B cell (primary cell): ENCODE measurements at regions of chr17 and their contacts with region 1.

Region 1: GRCh38 chr17:1229432-1229899 is 40.8 kb upstream of the BHLHA9 start:
- DNase-seq: peak; percentile 91
- ATAC-seq: peak; percentile 62
- H3K4me3 ChIP-seq: peak overlapping the region in 4 of 5 experiments; percentile 31 to 80 (median 66)
- H3K4me3 Mint-ChIP-seq: peak overlapping the region; percentile 83
- H3K27ac ChIP-seq: peak overlapping the region in 1 of 2 donors; percentile 82
- H3K27ac Mint-ChIP-seq: peak overlapping the region; percentile 78
- H3K4me1 ChIP-seq: peaks cover 25 to 32% of the 10 kb centered on the region in 2 donors
- H3K4me1 Mint-ChIP-seq: peaks cover 39% of the 10 kb centered on the region
- H3K27me3 ChIP-seq: peaks cover 0 to 11% (median 0%) of the 10 kb centered on the region in 4 experiments
- H3K27me3 Mint-ChIP-seq: peaks cover 9% of the 10 kb centered on the region
- CTCF ChIP-seq: no peak

Region 2: DNA sequence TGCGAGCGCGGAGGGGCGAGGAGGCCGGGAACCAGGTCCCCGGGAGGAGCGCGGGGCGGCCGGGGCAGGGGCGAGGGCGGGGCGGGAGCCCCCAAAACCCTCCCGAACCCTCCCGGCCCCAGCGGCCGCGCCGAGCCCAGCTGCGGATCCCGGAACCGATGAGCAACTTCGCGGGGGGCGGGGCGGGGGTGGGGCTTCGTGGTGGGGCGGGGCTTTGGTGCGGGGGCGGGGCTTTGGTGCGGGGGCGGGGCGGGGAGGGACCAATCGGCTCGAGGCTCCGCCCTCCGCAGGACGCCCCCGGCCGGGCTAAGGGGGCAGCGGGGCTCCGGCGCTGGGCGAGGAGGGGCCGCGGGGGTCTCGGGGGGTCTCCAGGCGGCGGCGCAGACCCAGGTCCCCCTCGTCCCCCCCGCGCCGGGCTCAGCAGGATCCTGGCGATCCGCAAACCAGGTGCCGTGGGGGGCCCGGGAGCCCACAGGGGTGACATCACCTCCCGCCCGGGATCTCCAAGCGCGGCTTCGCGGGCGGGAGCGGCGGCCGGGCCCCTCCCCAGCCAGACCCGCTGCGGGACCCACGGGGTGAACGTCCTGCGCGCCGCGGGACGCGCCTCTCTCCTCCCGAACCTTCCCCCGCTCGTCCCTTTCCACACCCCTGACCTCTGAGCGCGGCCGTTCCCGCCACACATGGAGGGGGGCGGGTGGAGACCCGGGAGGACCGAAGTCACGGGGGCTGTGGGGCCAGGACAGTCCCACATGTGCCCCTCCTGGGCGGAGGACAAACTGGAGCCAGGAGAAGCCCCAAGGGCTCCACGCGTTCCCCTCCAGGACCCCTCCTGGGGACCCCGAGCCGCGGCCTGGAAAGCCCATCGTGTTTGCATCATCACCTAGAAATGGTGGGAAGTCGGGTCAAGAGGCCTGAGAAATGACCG is 49.4 kb before region 1 on chr17 and contains the start of gene ABR:
- CTCF ChIA-PET with region 1: interaction called, 16 read pairs
- POLR2A ChIA-PET with region 1: interaction called, 8 read pairs
- intact Hi-C with region 1: loop called (anchors 2 kb)
- DNase-seq: peak; percentile 70
- ATAC-seq: peak; percentile 9
- H3K4me3 ChIP-seq: peak within 1 kb of the TSS in 4 of 5 experiments; percentile 47 to 71 (median 55)
- H3K4me3 Mint-ChIP-seq: peak within 1 kb of the TSS; percentile 87
- H3K27ac ChIP-seq: peak within 1 kb of the TSS in 1 of 2 donors; percentile 36
- H3K27ac Mint-ChIP-seq: peak within 1 kb of the TSS; percentile 53
- H3K4me1 ChIP-seq: peaks cover 59 to 69% of the 10 kb centered on the region in 2 donors
- H3K4me1 Mint-ChIP-seq: peaks cover 59% of the 10 kb centered on the region
- H3K27me3 ChIP-seq: peaks cover 0 to 24% (median 10%) of the 10 kb centered on the region in 4 experiments
- H3K27me3 Mint-ChIP-seq: no peaks in the 10 kb centered on the region
- CTCF ChIP-seq: no peak
- total RNA-seq, gene ABR: 262 and 304 TPM in 2 replicates

Region 3: GRCh38 chr17:1197781-1198490 is 31.5 kb before region 1 on chr17:
- CTCF ChIA-PET with region 1: interaction called, 42 read pairs
- POLR2A ChIA-PET with region 1: interaction called, 24 read pairs
- intact Hi-C with region 1: loop called (anchors 1 kb)
- DNase-seq: peak; percentile 92
- ATAC-seq: peak; percentile 87
- H3K4me3 ChIP-seq: peak overlapping the region in 1 of 5 experiments; percentile 29
- H3K4me3 Mint-ChIP-seq: peak overlapping the region; percentile 82
- H3K27ac ChIP-seq: peak overlapping the region; percentile 86 to 91
- H3K27ac Mint-ChIP-seq: peak overlapping the region; percentile 96
- H3K4me1 ChIP-seq: peaks cover 60 to 62% of the 10 kb centered on the region in 2 donors
- H3K4me1 Mint-ChIP-seq: peaks cover 60% of the 10 kb centered on the region
- H3K27me3 ChIP-seq: no peaks in the 10 kb centered on the region
- H3K27me3 Mint-ChIP-seq: no peaks in the 10 kb centered on the region
- CTCF ChIP-seq: no peak

Region 4: DNA sequence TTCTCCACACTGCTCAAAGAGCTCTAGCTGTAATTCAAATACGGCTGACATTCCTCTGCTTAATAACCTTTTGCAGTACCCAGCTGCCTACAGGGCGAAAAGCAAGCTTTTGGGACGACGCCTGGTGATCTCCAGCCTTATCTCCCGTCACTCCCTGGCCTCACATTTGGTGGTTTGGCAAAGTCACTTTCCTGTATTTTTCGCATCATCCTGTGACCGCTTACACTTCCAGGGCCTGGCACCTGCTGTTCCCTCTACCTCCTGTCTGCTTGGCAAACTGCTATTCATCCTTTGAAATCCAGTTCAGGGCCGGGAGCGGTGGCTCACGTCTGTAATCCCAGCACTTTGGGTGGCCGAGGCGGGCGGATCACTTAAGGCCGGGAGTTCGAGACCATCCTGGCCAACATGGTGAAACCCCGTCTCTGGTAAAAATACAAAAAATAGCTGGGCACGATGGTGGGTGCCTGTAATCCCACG is 38.0 kb after region 1 on chr17:
- CTCF ChIA-PET with region 1: no interaction called
- POLR2A ChIA-PET with region 1: interaction called, 4 read pairs
- intact Hi-C with region 1: loop called (anchors 2 kb)
- DNase-seq: no peak
- ATAC-seq: no peak
- H3K4me3 ChIP-seq: peak overlapping the region; percentile 30 to 92 (median 79)
- H3K4me3 Mint-ChIP-seq: peak overlapping the region; percentile 86
- H3K27ac ChIP-seq: peak overlapping the region; percentile 69 to 79
- H3K27ac Mint-ChIP-seq: peak overlapping the region; percentile 59
- H3K4me1 ChIP-seq: peaks cover 8 to 10% of the 10 kb centered on the region in 2 donors
- H3K4me1 Mint-ChIP-seq: peaks cover 12% of the 10 kb centered on the region
- H3K27me3 ChIP-seq: peaks cover 0 to 22% (median 5%) of the 10 kb centered on the region in 4 experiments
- H3K27me3 Mint-ChIP-seq: peaks cover 7% of the 10 kb centered on the region
- CTCF ChIP-seq: no peak